HCT116 (cell line): ENCODE measurements at regions of chr5 and their contacts with region 1.

Region 1: GRCh38 chr5:95781101-95781583 is 41.4 kb downstream of the GLRX start:
- DNase-seq: peak; percentile 62
- ATAC-seq: peak; percentile 99
- H3K4me3 ChIP-seq: no peak overlapping the region
- H3K27ac ChIP-seq: no peak overlapping the region
- H3K4me1 ChIP-seq: no peaks in the 10 kb centered on the region
- H3K27me3 ChIP-seq: no peaks in the 10 kb centered on the region
- CTCF ChIP-seq: peak; percentile 88 to 99 (median 95)
- POLR2A ChIP-seq: no peak
- RAD21 ChIP-seq: peak; percentile 94

Region 2: DNA sequence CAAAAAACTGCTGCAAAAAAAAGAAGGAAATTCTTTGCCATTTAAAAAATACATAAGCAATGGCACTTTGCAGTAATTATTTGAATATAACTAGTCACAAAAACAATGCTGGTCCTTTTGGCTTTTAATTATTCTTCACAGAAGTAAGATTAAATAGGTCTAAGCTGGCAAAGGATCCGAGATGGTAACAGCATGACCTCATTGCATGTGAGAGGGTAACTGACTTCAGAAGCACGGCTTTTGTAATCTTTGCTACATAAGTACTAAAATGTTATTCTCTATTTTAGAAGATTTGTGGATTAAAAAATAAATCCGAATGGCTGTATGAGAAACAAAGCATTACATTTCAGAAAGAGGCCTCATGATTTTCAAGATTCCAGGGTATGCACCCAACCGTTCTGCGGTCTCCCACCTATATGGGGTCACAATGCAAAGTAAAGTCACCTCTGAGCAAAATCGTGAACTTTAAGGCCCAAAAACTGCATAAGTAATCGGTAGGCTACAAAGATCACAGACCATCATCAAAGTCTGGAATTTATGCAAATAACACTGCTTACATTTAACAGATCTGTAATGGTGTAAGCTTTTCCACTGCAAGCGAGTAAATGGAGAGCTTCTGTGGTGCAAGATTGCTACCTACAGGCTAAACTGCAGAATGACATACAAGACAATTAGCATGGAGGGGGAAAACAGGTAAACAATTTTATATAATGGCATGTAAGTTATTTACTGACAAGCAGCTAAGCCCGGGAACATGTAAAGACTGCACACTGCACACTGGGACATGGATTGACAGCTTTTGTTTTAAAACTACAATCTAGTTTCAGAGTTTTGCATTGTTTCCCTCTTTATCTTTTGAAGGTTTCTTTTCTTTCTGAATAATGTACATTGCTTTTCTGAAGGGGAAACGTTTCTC is 931.1 kb before region 1 on chr5:
- CTCF ChIA-PET with region 1: no interaction called
- POLR2A ChIA-PET with region 1: no interaction called
- RAD21 ChIA-PET with region 1: no interaction called
- intact Hi-C with region 1: no loop called
- DNase-seq: peak; percentile 59
- ATAC-seq: peak; percentile 96
- H3K4me3 ChIP-seq: peak overlapping the region in 1 of 2 experiments; percentile 18; a peak in 2 of 4 replicates
- H3K27ac ChIP-seq: no peak overlapping the region
- H3K4me1 ChIP-seq: 0 out of 4 replicates have a peak, but pooled peaks cover 0 to 4% of the 10 kb centered on the region in 2 experiments
- H3K27me3 ChIP-seq: no peaks in the 10 kb centered on the region
- CTCF ChIP-seq: peak; percentile 58 to 85 (median 69); a peak in 5 of 6 replicates
- POLR2A ChIP-seq: no peak
- RAD21 ChIP-seq: peak; percentile 83

Region 3: DNA sequence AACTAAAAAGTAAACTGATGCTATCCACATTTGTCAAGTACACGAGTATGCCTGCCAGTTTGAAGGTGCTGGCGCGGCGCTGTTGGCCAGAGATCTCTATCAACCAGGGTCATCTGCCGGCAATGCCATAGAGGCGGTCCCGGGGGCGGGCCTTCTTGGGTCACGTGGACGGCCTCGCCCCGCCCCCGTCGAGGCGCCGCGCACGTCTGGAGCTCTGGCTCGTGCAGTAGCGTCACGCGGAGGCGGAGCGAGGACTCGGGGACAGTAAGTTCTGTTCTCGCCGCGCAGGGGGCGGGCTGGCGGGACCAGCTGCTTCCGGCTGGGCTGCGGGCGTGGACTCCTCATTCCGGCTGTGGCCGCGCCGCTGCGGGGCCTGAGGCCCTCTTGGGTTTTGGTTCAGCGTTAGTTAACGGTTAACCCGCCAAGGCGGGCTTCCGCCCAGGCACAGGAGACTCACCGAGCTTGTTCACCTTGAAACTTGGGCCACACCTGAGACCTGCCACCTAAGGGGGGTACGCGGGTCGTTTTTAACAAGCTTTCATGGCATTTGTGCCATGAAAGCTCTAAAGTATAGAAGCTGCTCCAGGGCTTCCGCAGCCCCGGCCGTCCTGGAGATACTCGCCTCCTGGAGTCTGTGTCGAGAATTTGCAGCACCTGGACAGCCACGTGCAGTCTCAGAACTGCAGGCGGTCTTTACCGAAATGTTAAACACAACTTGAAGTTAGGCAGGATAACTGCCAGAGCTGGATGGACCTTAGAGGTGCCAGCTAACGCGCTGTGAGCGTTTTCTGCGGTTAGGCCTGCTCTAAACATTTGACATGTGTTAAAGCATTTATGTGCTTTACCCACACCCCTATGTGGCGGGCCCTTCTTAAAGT is 134.3 kb before region 1 on chr5 and contains the start of gene RFESD:
- CTCF ChIA-PET with region 1: interaction called, 18 read pairs
- POLR2A ChIA-PET with region 1: interaction called, 5 read pairs
- RAD21 ChIA-PET with region 1: interaction called in 1 of 2 experiments, 4 read pairs
- intact Hi-C with region 1: loop called (anchors 1 kb)
- DNase-seq: peak; percentile 91
- ATAC-seq: peak; percentile 93
- H3K4me3 ChIP-seq: peak within 1 kb of the TSS; percentile 48 to 65
- H3K27ac ChIP-seq: peak within 1 kb of the TSS; percentile 76
- H3K4me1 ChIP-seq: peaks cover 9 to 33% of the 10 kb centered on the region in 2 experiments; a peak in 3 of 4 replicates
- H3K27me3 ChIP-seq: no peaks in the 10 kb centered on the region
- CTCF ChIP-seq: peak in 1 of 3 experiments; percentile 10; a peak in 1 of 6 replicates
- POLR2A ChIP-seq: peak; percentile 72
- RAD21 ChIP-seq: peak; percentile 34
- total RNA-seq, gene RFESD: 4.1 TPM

Region 4: DNA sequence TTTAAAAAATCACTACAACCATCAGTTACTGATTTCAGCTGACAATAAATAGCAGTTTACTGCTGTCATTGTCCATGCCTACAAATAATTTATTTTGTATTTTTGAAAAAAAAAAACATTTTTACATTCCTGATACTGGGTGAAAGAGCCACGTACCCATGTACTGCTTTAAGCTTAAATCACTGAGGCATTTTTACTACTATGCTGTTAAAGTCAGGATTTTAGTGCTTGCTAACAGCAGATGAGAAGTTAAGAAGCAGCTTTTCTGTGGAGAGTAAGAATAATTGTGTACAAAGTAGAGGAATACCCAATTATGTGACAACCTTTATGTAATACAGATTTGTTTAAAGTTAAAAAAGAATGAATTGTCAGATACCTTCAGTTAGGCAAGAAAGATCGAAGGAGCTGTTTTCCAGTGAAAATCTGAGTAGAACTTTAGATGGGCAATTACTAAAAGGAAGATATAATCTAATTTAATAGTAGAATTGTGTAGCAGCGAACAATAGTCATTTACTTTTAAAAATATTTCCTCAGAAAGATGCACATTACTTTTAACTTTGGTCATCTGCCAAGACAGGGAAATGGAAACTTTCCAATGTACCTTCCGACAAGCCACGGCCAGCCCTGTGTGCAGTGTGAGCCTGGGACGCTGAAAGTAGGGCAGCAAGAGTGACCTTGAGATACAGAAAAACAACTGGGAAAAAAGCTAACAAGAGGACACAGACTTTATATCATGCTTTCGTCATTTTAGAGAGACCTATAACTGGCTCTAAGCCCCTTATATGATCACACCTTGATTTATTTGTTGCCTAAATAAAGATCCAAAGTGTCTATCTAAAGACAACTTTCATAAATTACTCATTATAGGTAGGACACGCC is 10.1 kb before region 1 on chr5:
- CTCF ChIA-PET with region 1: interaction called, 21 read pairs
- POLR2A ChIA-PET with region 1: no interaction called
- RAD21 ChIA-PET with region 1: no interaction called
- intact Hi-C with region 1: no loop called
- DNase-seq: no peak
- ATAC-seq: no peak
- H3K4me3 ChIP-seq: no peak overlapping the region
- H3K27ac ChIP-seq: no peak overlapping the region
- H3K4me1 ChIP-seq: peaks cover 6 to 8% of the 10 kb centered on the region in 2 experiments; a peak in 3 of 4 replicates
- H3K27me3 ChIP-seq: no peaks in the 10 kb centered on the region
- CTCF ChIP-seq: no peak
- POLR2A ChIP-seq: no peak
- RAD21 ChIP-seq: no peak

Region 5: DNA sequence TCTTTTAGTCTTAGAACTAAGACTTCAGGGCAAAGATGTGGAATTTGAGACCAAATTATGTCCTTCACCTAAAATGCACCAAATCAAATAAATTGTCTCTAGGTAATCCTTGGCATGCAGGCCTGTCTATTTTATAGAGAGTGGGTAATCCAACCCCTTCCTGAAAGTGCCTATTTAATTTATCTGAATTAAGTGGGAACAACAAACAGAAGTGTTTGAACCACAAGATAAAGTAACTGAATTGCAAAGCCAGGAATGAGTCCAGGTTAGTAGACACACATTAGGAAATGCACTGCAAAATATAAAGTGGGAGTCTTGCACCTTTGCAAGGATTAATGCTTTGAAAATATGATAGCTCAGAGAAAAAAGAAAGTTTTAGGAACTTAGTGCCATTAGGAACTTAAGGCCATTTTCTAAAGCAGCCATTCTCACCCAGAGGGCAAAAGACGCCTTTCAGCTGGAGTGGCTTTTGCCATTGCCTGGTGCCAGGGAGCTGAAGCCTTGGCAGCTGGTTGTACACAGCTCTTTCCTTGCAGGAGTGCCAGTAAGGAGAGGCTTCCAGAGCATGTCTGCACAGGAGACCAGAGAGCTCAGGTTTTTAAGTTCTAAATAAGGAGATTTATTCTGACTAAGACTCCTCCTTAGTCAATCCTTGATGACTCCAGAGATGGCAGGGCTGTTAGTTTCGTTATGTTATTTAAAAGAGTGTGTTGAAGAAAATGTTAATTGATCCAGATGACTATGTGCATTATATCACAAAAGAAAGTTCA is 332.2 kb after region 1 on chr5:
- CTCF ChIA-PET with region 1: no interaction called
- POLR2A ChIA-PET with region 1: no interaction called
- RAD21 ChIA-PET with region 1: no interaction called
- intact Hi-C with region 1: no loop called
- DNase-seq: no peak
- ATAC-seq: no peak
- H3K4me3 ChIP-seq: no peak overlapping the region
- H3K27ac ChIP-seq: no peak overlapping the region
- H3K4me1 ChIP-seq: no peaks in the 10 kb centered on the region
- H3K27me3 ChIP-seq: no peaks in the 10 kb centered on the region
- CTCF ChIP-seq: no peak
- POLR2A ChIP-seq: no peak
- RAD21 ChIP-seq: no peak